ENCODE measurements at regions of chr9 and their contacts with region 1.

Region 1: DNA sequence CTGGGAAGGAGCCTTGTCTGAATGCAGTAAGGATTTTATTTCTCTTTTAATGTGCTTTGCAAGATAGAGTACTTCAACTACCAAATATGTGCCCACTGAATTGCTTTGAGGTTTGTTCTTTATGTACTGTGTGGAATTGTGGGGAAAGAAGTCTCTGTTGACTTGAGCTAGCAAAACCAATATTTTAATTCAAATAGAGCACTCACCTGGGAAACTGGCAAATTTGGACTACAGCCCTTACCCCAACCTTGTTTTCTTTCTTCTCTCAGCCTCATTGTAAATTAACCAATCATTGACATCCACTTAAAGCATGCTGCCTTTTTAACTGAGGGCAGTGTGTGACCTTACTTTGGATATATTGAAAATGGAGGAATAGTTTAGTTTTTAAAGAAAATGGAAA is 409.0 kb downstream of the SPATA31D1 start:
- DNase-seq: no peak
- ATAC-seq: no peak
- H3K4me3 ChIP-seq: no peak overlapping the region
- H3K4me3 Mint-ChIP-seq: no peak overlapping the region
- H3K27ac ChIP-seq: no peak overlapping the region
- H3K27ac Mint-ChIP-seq: no peak overlapping the region
- H3K4me1 ChIP-seq: no peaks in the 10 kb centered on the region
- H3K4me1 Mint-ChIP-seq: no peaks in the 10 kb centered on the region
- H3K27me3 ChIP-seq: no peaks in the 10 kb centered on the region
- H3K27me3 Mint-ChIP-seq: no peaks in the 10 kb centered on the region
- CTCF ChIP-seq: no peak

Region 2: GRCh38 chr9:82588301-82589180 is 191.0 kb after region 1 on chr9:
- intact Hi-C with region 1: loop called (anchors 5 kb)
- DNase-seq: no peak
- ATAC-seq: no peak
- H3K4me3 ChIP-seq: no peak overlapping the region
- H3K4me3 Mint-ChIP-seq: no peak overlapping the region
- H3K27ac ChIP-seq: no peak overlapping the region
- H3K27ac Mint-ChIP-seq: no peak overlapping the region
- H3K4me1 ChIP-seq: no peaks in the 10 kb centered on the region
- H3K4me1 Mint-ChIP-seq: peaks cover 0 to 5% of the 10 kb centered on the region in 2 donors
- H3K27me3 ChIP-seq: no peaks in the 10 kb centered on the region
- H3K27me3 Mint-ChIP-seq: no peaks in the 10 kb centered on the region
- CTCF ChIP-seq: no peak